Mammary epithelial cell (primary cell): ENCODE measurements at regions of chr12 and their contacts with region 1.

Region 1: DNA sequence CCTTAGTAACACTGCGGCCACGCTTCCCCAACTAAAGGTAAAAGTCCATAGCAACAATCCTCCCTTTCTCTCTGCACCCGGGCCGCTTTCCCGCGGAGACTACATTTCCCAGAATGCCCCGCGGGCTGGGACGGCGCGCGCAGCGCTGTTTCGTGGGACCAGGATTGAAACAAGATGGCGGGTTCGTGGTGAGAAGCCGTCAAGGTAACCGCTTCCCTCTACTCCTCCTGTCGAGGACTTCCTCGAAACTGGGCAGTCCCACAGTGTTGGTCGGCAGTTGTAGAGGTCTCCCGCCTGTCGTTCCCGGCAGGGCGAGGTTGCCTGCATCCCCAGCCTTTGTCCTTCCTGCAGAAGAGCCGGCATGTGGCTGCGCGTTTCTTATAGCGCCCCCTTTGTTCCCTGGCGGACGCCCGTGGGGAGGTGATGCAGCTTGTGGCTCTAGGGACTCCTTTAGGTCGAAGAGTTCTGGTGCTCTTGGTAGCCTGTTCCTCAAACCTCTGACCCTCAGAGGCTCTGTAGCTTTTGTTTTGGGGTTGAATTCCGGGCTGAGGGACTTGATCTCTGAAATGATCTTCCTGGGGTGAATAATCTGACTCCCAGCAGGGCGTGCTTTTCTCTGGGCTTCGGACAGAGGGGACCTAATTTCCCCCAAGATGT is at the start of gene MRPL42:
- DNase-seq: peak; percentile 90
- H3K4me3 ChIP-seq: peak within 1 kb of the TSS; percentile 73 to 88 (median 79)
- H3K27ac ChIP-seq: peak within 1 kb of the TSS; percentile 84
- H3K4me1 ChIP-seq: no peaks in the 10 kb centered on the region
- H3K27me3 ChIP-seq: no peaks in the 10 kb centered on the region
- CTCF ChIP-seq: peak; percentile 46 to 81
- total RNA-seq, gene MRPL42: 45.7 to 58.5 TPM

Region 2: GRCh38 chr12:93243689-93244513 is 223.6 kb before region 1 on chr12:
- CTCF ChIA-PET with region 1: no interaction called
- dilution Hi-C with region 1: no loop called
- in situ Hi-C with region 1: no loop called
- intact Hi-C with region 1: no loop called
- DNase-seq: peak; percentile 79
- H3K4me3 ChIP-seq: no peak overlapping the region
- H3K27ac ChIP-seq: no peak overlapping the region
- H3K4me1 ChIP-seq: peaks cover 14% of the 10 kb centered on the region
- H3K27me3 ChIP-seq: no peaks in the 10 kb centered on the region
- CTCF ChIP-seq: no peak

Region 3: DNA sequence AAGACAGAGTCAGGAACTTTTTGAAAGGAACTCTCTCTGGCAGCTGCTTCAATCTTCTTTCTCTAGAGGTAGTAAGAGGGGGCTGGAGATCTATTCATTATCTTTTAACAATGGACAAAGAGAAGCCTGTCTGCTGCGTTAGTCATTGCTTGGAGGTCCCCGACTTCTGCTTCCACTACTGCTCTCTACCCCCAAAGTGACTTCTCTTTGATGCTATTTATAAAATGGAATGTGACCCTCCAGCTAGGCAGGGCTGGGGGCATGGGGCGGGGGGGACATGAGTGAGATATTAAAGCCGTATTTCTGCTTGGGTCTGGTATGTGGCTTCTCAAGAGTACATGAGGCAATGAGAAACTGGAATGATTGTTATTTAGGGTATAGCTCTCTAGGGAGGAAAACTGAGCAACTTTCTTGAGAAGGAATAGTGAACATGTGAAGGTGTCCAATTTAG is 131.2 kb before region 1 on chr12:
- CTCF ChIA-PET with region 1: no interaction called
- dilution Hi-C with region 1: no loop called
- in situ Hi-C with region 1: no loop called
- intact Hi-C with region 1: no loop called
- DNase-seq: peak; percentile 49
- H3K4me3 ChIP-seq: no peak overlapping the region
- H3K27ac ChIP-seq: no peak overlapping the region
- H3K4me1 ChIP-seq: peaks cover 6% of the 10 kb centered on the region
- H3K27me3 ChIP-seq: no peaks in the 10 kb centered on the region
- CTCF ChIP-seq: no peak

Region 4: GRCh38 chr12:93403988-93404803 is 63.3 kb before region 1 on chr12:
- CTCF ChIA-PET with region 1: no interaction called
- dilution Hi-C with region 1: no loop called
- in situ Hi-C with region 1: no loop called
- intact Hi-C with region 1: no loop called
- DNase-seq: no peak
- H3K4me3 ChIP-seq: no peak overlapping the region
- H3K27ac ChIP-seq: no peak overlapping the region
- H3K4me1 ChIP-seq: no peaks in the 10 kb centered on the region
- H3K27me3 ChIP-seq: no peaks in the 10 kb centered on the region
- CTCF ChIP-seq: no peak

Region 5: GRCh38 chr12:93419388-93420034 is 48.0 kb before region 1 on chr12:
- CTCF ChIA-PET with region 1: interaction called, 10 read pairs
- dilution Hi-C with region 1: no loop called
- in situ Hi-C with region 1: no loop called
- intact Hi-C with region 1: no loop called
- DNase-seq: peak; percentile 32
- H3K4me3 ChIP-seq: no peak overlapping the region
- H3K27ac ChIP-seq: no peak overlapping the region
- H3K4me1 ChIP-seq: no peaks in the 10 kb centered on the region
- H3K27me3 ChIP-seq: no peaks in the 10 kb centered on the region
- CTCF ChIP-seq: peak; percentile 43 to 55

Region 6: DNA sequence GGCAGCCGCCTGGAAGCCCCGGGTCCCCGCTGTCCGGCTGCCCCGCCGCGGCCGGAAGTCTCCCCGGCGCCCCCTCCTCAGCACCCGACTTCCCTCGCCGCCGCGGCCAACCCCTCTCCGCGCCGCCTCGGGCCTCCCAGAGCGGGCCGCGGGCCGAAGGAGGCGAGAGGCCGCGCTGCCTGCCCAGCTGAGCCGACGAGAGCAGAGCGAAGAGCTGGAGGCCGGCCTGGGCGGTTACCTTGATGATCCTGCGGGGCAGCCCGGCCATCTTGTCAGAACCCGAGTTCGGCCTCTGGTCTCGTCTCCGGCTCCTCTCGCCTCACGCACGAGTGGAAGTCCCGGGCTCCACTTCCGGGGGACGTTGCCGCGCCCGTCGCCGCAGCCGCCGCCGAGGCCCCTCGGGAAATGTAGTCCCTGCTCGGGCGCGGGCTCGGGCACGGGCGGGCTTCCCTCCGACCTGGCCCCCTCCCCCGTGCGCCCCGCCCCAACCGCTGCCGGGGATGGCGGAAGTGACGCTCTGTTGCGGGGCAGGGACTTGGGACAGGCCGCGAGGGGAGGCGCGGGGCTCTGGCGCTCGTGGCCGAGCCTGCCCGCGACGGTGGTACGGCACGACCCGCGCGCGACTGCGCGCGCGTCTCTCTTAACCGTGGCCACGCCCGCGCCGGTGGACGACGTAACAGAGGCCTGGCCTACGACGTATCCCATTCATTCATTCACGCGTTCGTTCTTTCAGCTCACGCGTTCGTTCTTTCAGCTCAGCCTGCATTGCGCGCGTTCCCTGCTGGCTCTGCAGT is 25.7 kb before region 1 on chr12 and contains the start of gene UBE2N:
- CTCF ChIA-PET with region 1: interaction called, 3 read pairs
- dilution Hi-C with region 1: no loop called
- in situ Hi-C with region 1: no loop called
- intact Hi-C with region 1: loop called (anchors 1 kb)
- DNase-seq: peak; percentile 96
- H3K4me3 ChIP-seq: peak within 1 kb of the TSS; percentile 72 to 97 (median 93)
- H3K27ac ChIP-seq: peak within 1 kb of the TSS; percentile 95
- H3K4me1 ChIP-seq: peaks cover 32% of the 10 kb centered on the region
- H3K27me3 ChIP-seq: no peaks in the 10 kb centered on the region
- CTCF ChIP-seq: no peak
- total RNA-seq, gene UBE2N: 65.5 to 137 TPM

Region 7: DNA sequence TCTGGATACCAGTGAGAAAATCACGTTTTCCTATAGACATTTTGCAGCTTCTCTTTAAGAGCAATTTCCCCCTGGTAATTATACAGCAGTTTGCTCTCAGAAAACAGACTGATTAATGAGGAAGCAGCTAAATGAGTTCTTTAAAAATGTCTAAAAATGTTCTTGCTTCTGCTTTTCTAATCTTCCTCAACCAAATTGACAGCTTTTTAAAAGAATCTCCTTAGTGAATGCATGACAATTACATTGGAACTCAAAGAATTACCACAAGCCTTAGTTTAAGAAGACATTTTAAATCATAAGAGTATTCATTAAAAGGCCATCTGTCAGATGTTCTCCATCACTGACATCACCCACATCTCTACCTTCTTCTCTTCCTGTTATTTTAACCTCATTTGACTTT is 545.1 kb after region 1 on chr12:
- CTCF ChIA-PET with region 1: no interaction called
- dilution Hi-C with region 1: no loop called
- in situ Hi-C with region 1: no loop called
- intact Hi-C with region 1: no loop called
- DNase-seq: no peak
- H3K4me3 ChIP-seq: no peak overlapping the region
- H3K27ac ChIP-seq: no peak overlapping the region
- H3K4me1 ChIP-seq: no peaks in the 10 kb centered on the region
- H3K27me3 ChIP-seq: no peaks in the 10 kb centered on the region
- CTCF ChIP-seq: no peak